ENCODE measurements at regions of chr10 and their contacts with region 1.

Region 1: GRCh38 chr10:26890956-26891355 is 30.2 kb upstream of the ABI1 start:
- DNase-seq: no peak
- H3K4me3 ChIP-seq: no peak overlapping the region
- CTCF ChIP-seq: peak; percentile 52

Region 2: GRCh38 chr10:27360581-27361172 is 469.7 kb after region 1 on chr10:
- CTCF ChIA-PET with region 1: interaction called, 23 read pairs
- POLR2A ChIA-PET with region 1: no interaction called
- DNase-seq: no peak
- H3K4me3 ChIP-seq: no peak overlapping the region
- CTCF ChIP-seq: peak; percentile 81